Activated CD4-positive, alpha-beta T cell treated with anti-CD3 and anti-CD28 coated beads for 36 hours (primary cell): ENCODE measurements at regions of chr11 and their contacts with region 1.

Region 1: GRCh38 chr11:58579192-58580129 is 598 bp downstream of the ZFP91 start:
- DNase-seq: peak; percentile 96
- ATAC-seq: peak; percentile 33
- H3K4me3 Mint-ChIP-seq: peak overlapping the region; percentile 89
- H3K27ac Mint-ChIP-seq: peak overlapping the region; percentile 99
- H3K4me1 Mint-ChIP-seq: peaks cover 44% of the 10 kb centered on the region
- H3K27me3 Mint-ChIP-seq: no peaks in the 10 kb centered on the region

Region 2: GRCh38 chr11:57324886-57325734 is 1254.4 kb before region 1 on chr11 and contains the start of gene TNKS1BP1:
- CTCF ChIA-PET with region 1: no interaction called
- POLR2A ChIA-PET with region 1: no interaction called
- intact Hi-C with region 1: loop called (anchors 2 to 10 kb)
- DNase-seq: peak; percentile 94
- ATAC-seq: peak; percentile 88
- H3K4me3 Mint-ChIP-seq: peak within 1 kb of the TSS; percentile 82
- H3K27ac Mint-ChIP-seq: peak within 1 kb of the TSS; percentile 98
- H3K4me1 Mint-ChIP-seq: peaks cover 58% of the 10 kb centered on the region
- H3K27me3 Mint-ChIP-seq: no peaks in the 10 kb centered on the region
- total RNA-seq, gene TNKS1BP1: 19.1 to 21.6 TPM

Region 3: GRCh38 chr11:57567515-57568329 is 1011.7 kb before region 1 on chr11 and contains the start of gene UBE2L6:
- CTCF ChIA-PET with region 1: no interaction called
- POLR2A ChIA-PET with region 1: no interaction called
- intact Hi-C with region 1: loop called in 1 of 2 experiments (anchors 2 kb)
- DNase-seq: peak; percentile 95
- ATAC-seq: peak; percentile 80
- H3K4me3 Mint-ChIP-seq: peak within 1 kb of the TSS; percentile 89
- H3K27ac Mint-ChIP-seq: peak within 1 kb of the TSS; percentile 98
- H3K4me1 Mint-ChIP-seq: peaks cover 29% of the 10 kb centered on the region
- H3K27me3 Mint-ChIP-seq: no peaks in the 10 kb centered on the region
- total RNA-seq, gene UBE2L6: 179 to 252 TPM

Region 4: GRCh38 chr11:57741132-57742086 is 838.1 kb before region 1 on chr11 and contains the start of gene SELENOH:
- CTCF ChIA-PET with region 1: interaction called, 4 read pairs
- POLR2A ChIA-PET with region 1: interaction called, 3 read pairs
- intact Hi-C with region 1: loop called (anchors 1 kb)
- DNase-seq: peak; percentile 98
- ATAC-seq: peak; percentile 94
- H3K4me3 Mint-ChIP-seq: peak within 1 kb of the TSS; percentile 98
- H3K27ac Mint-ChIP-seq: peak within 1 kb of the TSS; percentile 100
- H3K4me1 Mint-ChIP-seq: peaks cover 28% of the 10 kb centered on the region
- H3K27me3 Mint-ChIP-seq: no peaks in the 10 kb centered on the region
- total RNA-seq, gene SELENOH: 117 to 244 TPM

Region 5: GRCh38 chr11:58531865-58532341 is 47.6 kb before region 1 on chr11:
- CTCF ChIA-PET with region 1: no interaction called
- POLR2A ChIA-PET with region 1: no interaction called
- intact Hi-C with region 1: no loop called
- DNase-seq: no peak
- ATAC-seq: no peak
- H3K4me3 Mint-ChIP-seq: no peak overlapping the region
- H3K27ac Mint-ChIP-seq: no peak overlapping the region
- H3K4me1 Mint-ChIP-seq: peaks cover 51% of the 10 kb centered on the region
- H3K27me3 Mint-ChIP-seq: no peaks in the 10 kb centered on the region

Region 6: GRCh38 chr11:58616594-58616993 is 37.1 kb after region 1 on chr11:
- CTCF ChIA-PET with region 1: interaction called, 5 read pairs
- POLR2A ChIA-PET with region 1: interaction called, 6 read pairs
- intact Hi-C with region 1: loop called (anchors 2 to 5 kb)
- DNase-seq: no peak
- ATAC-seq: no peak
- H3K4me3 Mint-ChIP-seq: no peak overlapping the region
- H3K27ac Mint-ChIP-seq: peak overlapping the region; percentile 13
- H3K4me1 Mint-ChIP-seq: peaks cover 34% of the 10 kb centered on the region
- H3K27me3 Mint-ChIP-seq: no peaks in the 10 kb centered on the region

Region 7: GRCh38 chr11:58788355-58789023 is 209.0 kb after region 1 on chr11:
- CTCF ChIA-PET with region 1: no interaction called
- POLR2A ChIA-PET with region 1: no interaction called
- intact Hi-C with region 1: loop called in 1 of 2 experiments (anchors 2 kb)
- DNase-seq: peak; percentile 58
- ATAC-seq: peak; percentile 87
- H3K4me3 Mint-ChIP-seq: no peak overlapping the region
- H3K27ac Mint-ChIP-seq: no peak overlapping the region
- H3K4me1 Mint-ChIP-seq: no peaks in the 10 kb centered on the region
- H3K27me3 Mint-ChIP-seq: peaks cover 4% of the 10 kb centered on the region

Region 8: GRCh38 chr11:59615637-59616395 is 1036.4 kb after region 1 on chr11 and contains the start of gene OSBP:
- CTCF ChIA-PET with region 1: no interaction called
- POLR2A ChIA-PET with region 1: interaction called, 3 read pairs
- intact Hi-C with region 1: loop called in 1 of 2 experiments (anchors 5 kb)
- DNase-seq: peak; percentile 98
- ATAC-seq: peak; percentile 88
- H3K4me3 Mint-ChIP-seq: peak within 1 kb of the TSS; percentile 99
- H3K27ac Mint-ChIP-seq: peak within 1 kb of the TSS; percentile 96
- H3K4me1 Mint-ChIP-seq: peaks cover 40% of the 10 kb centered on the region
- H3K27me3 Mint-ChIP-seq: no peaks in the 10 kb centered on the region
- total RNA-seq, gene OSBP: 37.9 to 44.2 TPM